ENCODE measurements at regions of chr3 and their contacts with region 1.

Region 1: GRCh38 chr3:141659821-141660613 is 78.1 kb upstream of the RNF7 start:
- DNase-seq: peak; percentile 53 to 84
- H3K4me3 ChIP-seq: peak overlapping the region; percentile 60 to 74
- H3K27ac ChIP-seq: peak overlapping the region; percentile 81 to 83
- H3K4me1 ChIP-seq: peaks cover 0 to 49% (median 14%) of the 10 kb centered on the region in 4 donors
- H3K27me3 ChIP-seq: no peaks in the 10 kb centered on the region
- CTCF ChIP-seq: no peak

Region 2: DNA sequence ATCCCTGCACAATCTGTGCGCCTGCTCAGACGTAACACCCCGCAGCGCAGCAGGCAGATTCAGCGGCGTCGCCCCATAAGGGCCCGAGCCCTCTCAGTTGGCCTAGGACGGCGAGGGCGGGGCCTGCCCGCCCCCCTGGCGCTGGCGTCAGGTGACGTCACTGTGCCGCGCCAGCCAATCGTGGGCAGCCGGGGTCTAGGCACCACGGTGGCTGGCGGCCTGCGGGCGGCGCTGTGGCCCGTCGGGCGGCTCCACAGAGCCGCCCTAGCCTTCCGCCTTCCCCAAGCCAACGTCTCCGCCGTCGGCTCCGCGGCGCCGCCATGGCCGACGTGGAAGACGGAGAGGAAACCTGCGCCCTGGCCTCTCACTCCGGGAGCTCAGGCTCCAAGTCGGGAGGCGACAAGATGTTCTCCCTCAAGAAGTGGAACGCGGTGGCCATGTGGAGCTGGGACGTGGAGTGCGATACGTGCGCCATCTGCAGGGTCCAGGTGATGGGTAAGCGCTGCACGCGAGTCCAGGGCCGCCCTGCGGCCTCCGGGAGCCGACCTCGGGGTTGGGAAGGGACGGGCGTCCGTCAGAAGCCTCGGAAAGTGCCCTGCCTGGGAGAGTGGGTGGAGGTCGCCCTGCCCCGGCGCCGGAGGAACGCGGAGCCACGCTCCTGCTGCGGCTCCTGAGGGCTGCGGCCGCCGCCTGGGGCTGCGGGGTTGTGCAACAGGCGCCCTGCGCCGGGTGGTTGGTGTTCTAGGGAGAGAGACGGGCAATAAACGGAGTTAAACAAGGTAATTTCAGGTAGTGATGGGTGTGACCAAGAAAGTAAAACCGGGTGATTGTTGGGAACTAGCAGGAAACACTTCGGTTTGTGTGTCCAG is 78.2 kb after region 1 on chr3 and contains the start of gene RNF7:
- intact Hi-C with region 1: loop called (anchors 10 kb)
- DNase-seq: peak; percentile 92 to 97
- H3K4me3 ChIP-seq: peak within 1 kb of the TSS; percentile 76 to 88
- H3K27ac ChIP-seq: peak within 1 kb of the TSS; percentile 95 to 96
- H3K4me1 ChIP-seq: peaks cover 0 to 37% (median 25%) of the 10 kb centered on the region in 4 donors
- H3K27me3 ChIP-seq: no peaks in the 10 kb centered on the region
- CTCF ChIP-seq: peak; percentile 86 to 90